Activated naive CD4-positive, alpha-beta T cell treated with anti-CD3 and anti-CD28 coated beads for 36 hours (primary cell): ENCODE measurements at regions of chr6 and their contacts with region 1.

Region 1: DNA sequence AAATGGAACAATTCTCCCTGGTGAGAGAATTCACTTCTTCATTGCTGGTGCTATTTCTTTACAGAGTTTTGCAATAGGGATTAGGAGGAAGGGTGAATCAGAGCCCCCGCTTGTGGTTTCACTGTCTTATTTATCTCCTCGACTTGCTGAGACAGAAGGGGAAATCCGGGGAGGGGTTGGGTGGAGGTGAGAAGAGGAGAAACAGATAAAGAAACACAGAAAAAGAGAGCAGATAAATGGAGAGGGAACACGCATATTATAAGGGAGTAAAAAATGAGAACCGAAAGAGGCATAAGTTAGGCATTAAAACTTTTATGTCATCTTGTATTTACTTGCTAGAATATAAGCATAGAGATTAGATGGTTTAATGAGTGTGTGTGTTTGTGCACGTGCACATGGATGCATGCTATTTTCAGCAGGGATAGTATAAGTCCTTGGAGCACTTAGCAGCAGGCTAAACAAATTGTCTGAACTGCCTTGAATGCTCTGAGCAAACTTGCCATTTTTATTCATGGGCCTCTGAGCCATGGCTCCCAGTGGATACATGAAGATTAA is 105.0 kb downstream of the OLIG3 start:
- DNase-seq: peak; percentile 93
- H3K4me3 Mint-ChIP-seq: no peak overlapping the region
- H3K27ac Mint-ChIP-seq: peak overlapping the region; percentile 10
- H3K4me1 Mint-ChIP-seq: peaks cover 36% of the 10 kb centered on the region
- H3K27me3 Mint-ChIP-seq: no peaks in the 10 kb centered on the region

Region 2: GRCh38 chr6:137363805-137364138 is 25.5 kb before region 1 on chr6:
- CTCF ChIA-PET with region 1: no interaction called
- intact Hi-C with region 1: loop called (anchors 1 kb)
- DNase-seq: no peak
- H3K4me3 Mint-ChIP-seq: no peak overlapping the region
- H3K27ac Mint-ChIP-seq: no peak overlapping the region
- H3K4me1 Mint-ChIP-seq: peaks cover 19% of the 10 kb centered on the region
- H3K27me3 Mint-ChIP-seq: no peaks in the 10 kb centered on the region

Region 3: DNA sequence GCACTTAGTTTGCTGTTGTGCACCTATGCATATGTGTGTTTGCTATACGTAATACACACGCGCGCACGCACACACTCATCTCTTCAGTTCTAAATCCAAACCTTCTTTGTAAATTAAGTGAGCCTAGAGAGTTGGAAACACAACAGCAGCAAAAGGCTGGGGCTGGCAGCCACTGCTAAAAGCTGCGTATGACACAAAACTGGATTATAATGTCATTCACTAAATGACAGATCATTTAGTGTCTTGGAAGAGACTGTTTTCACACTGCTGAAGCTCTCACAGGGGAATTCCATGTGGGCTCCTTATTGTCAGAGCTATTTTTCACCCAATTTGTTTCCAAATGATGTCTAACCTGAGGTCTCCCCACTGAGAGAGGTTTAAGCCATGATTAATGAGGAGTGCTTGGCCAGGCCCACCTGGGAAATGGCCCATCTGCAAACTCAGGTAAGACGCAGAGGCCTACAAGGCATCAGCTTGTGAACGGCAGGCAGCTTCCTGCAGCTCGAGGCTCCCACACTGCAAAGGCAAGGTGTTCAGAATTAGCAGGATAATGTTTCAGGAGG is 10.7 kb after region 1 on chr6:
- CTCF ChIA-PET with region 1: no interaction called
- intact Hi-C with region 1: loop called (anchors 1 kb)
- DNase-seq: peak; percentile 52
- H3K4me3 Mint-ChIP-seq: no peak overlapping the region
- H3K27ac Mint-ChIP-seq: no peak overlapping the region
- H3K4me1 Mint-ChIP-seq: peaks cover 9% of the 10 kb centered on the region
- H3K27me3 Mint-ChIP-seq: no peaks in the 10 kb centered on the region